Activated T-helper 2 cell treated with anti-CD3 and anti-CD28 coated beads, Interferon-gamma antibody, Interleukin-2, Interleukin-4, amounts not matched to agents 10 μg/mL and 5 μg/mL and 100 μg/mL, durations not matched to agents 14 hours and 24 hours and 36 hours (primary cell): ENCODE measurements at regions of chr5 and their contacts with region 1.

Region 1: GRCh38 chr5:172984243-172984953 is 827 bp downstream of the ATP6V0E1 start:
- DNase-seq: peak; percentile 71
- H3K4me3 Mint-ChIP-seq: peak overlapping the region; percentile 98
- H3K27ac Mint-ChIP-seq: peak overlapping the region; percentile 99
- H3K4me1 Mint-ChIP-seq: peaks cover 18% of the 10 kb centered on the region
- H3K27me3 Mint-ChIP-seq: no peaks in the 10 kb centered on the region

Region 2: GRCh38 chr5:172958331-172959046 is 25.9 kb before region 1 on chr5:
- intact Hi-C with region 1: loop called (anchors 1 kb)
- DNase-seq: peak; percentile 54
- H3K4me3 Mint-ChIP-seq: peak overlapping the region; percentile 92
- H3K27ac Mint-ChIP-seq: peak overlapping the region; percentile 95
- H3K4me1 Mint-ChIP-seq: peaks cover 13% of the 10 kb centered on the region
- H3K27me3 Mint-ChIP-seq: peaks cover 2% of the 10 kb centered on the region

Region 3: GRCh38 chr5:173035904-173036707 is 51.7 kb after region 1 on chr5:
- intact Hi-C with region 1: loop called (anchors 1 kb)
- DNase-seq: no peak
- H3K4me3 Mint-ChIP-seq: peak overlapping the region; percentile 61
- H3K27ac Mint-ChIP-seq: peak overlapping the region; percentile 83
- H3K4me1 Mint-ChIP-seq: peaks cover 41% of the 10 kb centered on the region
- H3K27me3 Mint-ChIP-seq: no peaks in the 10 kb centered on the region

Region 4: DNA sequence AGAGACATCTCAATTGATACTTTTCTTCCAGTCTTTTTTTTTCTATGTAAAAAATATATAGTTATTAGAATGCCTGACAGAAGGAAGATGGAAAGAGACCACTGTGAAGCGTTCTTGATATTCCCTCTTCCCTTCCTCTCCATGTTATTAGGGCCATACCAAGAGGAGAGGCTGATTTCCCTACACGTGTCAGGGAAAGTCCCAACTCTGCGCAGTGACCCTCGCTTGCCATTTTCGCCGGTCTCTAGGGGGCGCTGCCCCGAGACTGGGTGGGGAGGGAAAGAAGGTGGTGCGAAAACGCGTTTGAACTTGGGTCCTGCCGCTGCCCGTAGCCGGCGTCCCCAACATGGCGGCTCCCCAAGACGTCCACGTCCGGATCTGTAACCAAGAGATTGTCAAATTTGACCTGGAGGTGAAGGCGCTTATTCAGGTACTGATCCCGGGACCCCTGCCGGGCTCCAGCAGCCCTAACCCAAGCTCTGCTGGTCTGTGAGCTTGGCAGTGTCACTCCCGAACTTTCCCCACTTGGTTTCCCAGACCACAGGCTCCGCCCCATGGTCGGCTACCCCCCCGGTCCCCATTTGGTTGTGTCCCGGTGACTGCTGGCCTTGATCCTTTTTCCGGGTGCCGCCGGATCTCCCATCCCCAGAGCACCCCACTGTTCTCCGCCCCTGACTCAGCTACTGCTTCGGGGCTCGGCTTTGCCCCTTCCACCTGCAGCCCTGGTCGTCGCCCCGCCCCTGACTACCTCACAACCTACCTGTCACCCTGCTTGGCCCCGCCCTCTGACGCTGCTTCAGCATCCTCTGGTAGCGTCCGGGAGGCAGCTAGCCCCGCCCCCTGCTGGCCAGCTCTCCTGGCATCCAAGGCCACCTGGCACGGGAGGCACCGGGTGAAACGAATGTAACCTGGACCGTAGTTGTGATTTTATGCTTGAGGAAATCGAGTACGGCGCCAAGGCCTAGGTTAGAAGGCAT is 160.1 kb after region 1 on chr5 and contains the start of gene BNIP1:
- intact Hi-C with region 1: loop called (anchors 1 kb)
- DNase-seq: peak; percentile 91
- H3K4me3 Mint-ChIP-seq: peak within 1 kb of the TSS; percentile 95
- H3K27ac Mint-ChIP-seq: peak within 1 kb of the TSS; percentile 98
- H3K4me1 Mint-ChIP-seq: peaks cover 5% of the 10 kb centered on the region
- H3K27me3 Mint-ChIP-seq: no peaks in the 10 kb centered on the region
- total RNA-seq, gene BNIP1: 22.6 and 23.2 TPM in 2 replicates

Region 5: GRCh38 chr5:173163219-173163618 is 178.8 kb after region 1 on chr5:
- intact Hi-C with region 1: no loop called
- DNase-seq: no peak
- H3K4me3 Mint-ChIP-seq: no peak overlapping the region
- H3K27ac Mint-ChIP-seq: no peak overlapping the region
- H3K4me1 Mint-ChIP-seq: no peaks in the 10 kb centered on the region
- H3K27me3 Mint-ChIP-seq: no peaks in the 10 kb centered on the region

Region 6: DNA sequence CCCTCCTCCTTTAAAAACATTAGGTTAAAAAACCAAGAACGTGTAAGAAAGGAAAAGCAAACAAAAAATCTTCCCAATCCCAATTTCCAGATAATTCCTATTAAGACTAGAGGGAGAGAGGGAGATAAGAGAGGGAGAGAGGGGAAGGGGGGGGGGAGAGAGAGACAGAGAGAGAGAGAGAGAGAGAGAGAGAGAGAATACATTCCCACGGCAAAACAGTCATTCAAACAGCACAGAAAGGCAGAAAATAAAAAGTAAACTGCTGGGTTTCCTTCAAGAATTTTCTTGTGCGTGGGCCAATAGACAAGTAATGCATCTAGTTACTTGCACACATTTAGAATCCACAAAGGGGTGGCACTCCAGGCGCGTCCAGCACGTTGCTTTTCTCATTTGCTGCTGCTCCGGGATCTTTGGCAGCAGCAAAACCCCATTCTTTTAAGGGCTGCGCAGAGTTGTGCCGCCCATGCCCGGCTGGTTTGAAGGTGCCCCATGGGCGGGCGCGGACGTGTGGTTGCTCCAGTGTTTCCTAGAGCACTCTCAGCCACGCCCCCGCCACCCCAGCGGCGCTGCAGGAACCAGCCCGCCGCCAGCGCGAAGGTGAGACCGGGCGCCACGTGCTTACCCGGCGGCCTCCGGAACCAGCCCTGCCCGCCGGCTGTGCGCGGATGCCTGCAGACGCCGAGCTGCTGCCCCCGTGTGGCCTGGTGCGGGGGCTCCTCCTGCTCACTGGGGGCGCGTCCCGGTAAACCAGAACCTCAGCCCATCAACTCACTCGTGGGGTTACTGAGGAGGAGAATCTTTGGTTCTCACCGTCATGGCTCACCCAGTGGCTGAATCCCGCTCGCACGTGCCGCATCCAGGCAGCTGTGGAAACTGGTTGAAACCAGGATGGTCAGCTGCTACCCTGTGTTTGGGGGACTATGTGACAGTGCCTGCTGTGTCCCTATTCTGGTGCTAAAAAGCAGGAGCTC is 299.2 kb after region 1 on chr5:
- intact Hi-C with region 1: loop called (anchors 2 kb)
- DNase-seq: peak; percentile 66
- H3K4me3 Mint-ChIP-seq: no peak overlapping the region
- H3K27ac Mint-ChIP-seq: no peak overlapping the region
- H3K4me1 Mint-ChIP-seq: peaks cover 9% of the 10 kb centered on the region
- H3K27me3 Mint-ChIP-seq: peaks cover 57% of the 10 kb centered on the region